GM10248 (cell line): ENCODE measurements at regions of chr2 and their contacts with region 1.

Region 1: GRCh38 chr2:207746131-207746530 is 23.6 kb downstream of the FZD5 start:
- DNase-seq: peak; percentile 65
- CTCF ChIP-seq: peak; percentile 92

Region 2: DNA sequence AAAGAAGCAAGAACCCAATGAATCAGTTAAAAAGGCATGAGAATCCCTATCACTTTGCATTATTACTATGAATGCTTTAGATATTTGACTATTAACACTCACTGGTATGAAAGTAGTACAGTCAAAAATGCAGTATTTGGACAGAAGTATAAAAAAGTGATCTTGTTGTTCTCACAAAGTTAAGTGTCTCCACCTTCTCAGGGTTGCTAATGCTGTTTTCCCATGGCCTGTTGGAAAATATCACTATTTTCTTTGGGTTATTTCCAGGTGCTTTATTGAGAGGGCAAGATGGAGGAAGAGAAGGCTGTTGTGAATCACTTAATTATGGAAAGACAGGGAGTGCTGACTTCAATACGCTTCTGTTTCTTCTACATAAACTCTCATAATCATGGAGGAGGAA is 229.9 kb before region 1 on chr2:
- CTCF ChIA-PET with region 1: no interaction called
- POLR2A ChIA-PET with region 1: no interaction called
- DNase-seq: no peak
- CTCF ChIP-seq: no peak

Region 3: GRCh38 chr2:207762146-207762545 is 16.0 kb after region 1 on chr2:
- CTCF ChIA-PET with region 1: interaction called, 14 read pairs
- POLR2A ChIA-PET with region 1: interaction called, 3 read pairs
- DNase-seq: no peak
- CTCF ChIP-seq: no peak

Region 4: DNA sequence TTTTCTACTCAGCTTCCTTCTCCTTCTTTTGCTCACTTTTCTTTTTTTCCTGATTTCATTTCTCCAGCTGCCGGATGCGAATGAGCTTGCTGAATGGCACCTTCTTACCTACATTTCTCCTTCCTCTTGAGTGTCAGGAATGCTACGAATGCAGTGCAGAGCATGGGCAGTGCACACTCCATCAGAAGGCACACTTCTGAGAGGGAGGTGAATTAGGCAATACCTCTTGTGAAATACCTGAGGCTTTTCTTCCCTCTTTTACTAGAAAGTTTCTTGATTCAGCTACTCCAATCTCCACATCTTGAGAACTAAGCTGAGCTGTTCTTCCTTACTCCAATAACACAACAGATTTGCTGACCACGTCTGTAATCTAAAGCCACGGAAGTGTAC is 228.1 kb after region 1 on chr2:
- CTCF ChIA-PET with region 1: interaction called, 72 read pairs
- POLR2A ChIA-PET with region 1: no interaction called
- DNase-seq: no peak
- CTCF ChIP-seq: no peak

Region 5: GRCh38 chr2:208033758-208034502 is 287.8 kb after region 1 on chr2:
- CTCF ChIA-PET with region 1: interaction called, 153 read pairs
- POLR2A ChIA-PET with region 1: no interaction called
- DNase-seq: peak; percentile 62
- CTCF ChIP-seq: peak; percentile 72

Region 6: GRCh38 chr2:208046686-208047085 is 300.6 kb after region 1 on chr2:
- CTCF ChIA-PET with region 1: interaction called, 153 read pairs
- POLR2A ChIA-PET with region 1: no interaction called
- DNase-seq: no peak
- CTCF ChIP-seq: no peak

Region 7: GRCh38 chr2:208179028-208179609 is 433.0 kb after region 1 on chr2:
- CTCF ChIA-PET with region 1: no interaction called
- POLR2A ChIA-PET with region 1: no interaction called
- DNase-seq: no peak
- CTCF ChIP-seq: no peak